GM12878 (cell line): ENCODE measurements at regions of chr19 and their contacts with region 1.

Region 1: DNA sequence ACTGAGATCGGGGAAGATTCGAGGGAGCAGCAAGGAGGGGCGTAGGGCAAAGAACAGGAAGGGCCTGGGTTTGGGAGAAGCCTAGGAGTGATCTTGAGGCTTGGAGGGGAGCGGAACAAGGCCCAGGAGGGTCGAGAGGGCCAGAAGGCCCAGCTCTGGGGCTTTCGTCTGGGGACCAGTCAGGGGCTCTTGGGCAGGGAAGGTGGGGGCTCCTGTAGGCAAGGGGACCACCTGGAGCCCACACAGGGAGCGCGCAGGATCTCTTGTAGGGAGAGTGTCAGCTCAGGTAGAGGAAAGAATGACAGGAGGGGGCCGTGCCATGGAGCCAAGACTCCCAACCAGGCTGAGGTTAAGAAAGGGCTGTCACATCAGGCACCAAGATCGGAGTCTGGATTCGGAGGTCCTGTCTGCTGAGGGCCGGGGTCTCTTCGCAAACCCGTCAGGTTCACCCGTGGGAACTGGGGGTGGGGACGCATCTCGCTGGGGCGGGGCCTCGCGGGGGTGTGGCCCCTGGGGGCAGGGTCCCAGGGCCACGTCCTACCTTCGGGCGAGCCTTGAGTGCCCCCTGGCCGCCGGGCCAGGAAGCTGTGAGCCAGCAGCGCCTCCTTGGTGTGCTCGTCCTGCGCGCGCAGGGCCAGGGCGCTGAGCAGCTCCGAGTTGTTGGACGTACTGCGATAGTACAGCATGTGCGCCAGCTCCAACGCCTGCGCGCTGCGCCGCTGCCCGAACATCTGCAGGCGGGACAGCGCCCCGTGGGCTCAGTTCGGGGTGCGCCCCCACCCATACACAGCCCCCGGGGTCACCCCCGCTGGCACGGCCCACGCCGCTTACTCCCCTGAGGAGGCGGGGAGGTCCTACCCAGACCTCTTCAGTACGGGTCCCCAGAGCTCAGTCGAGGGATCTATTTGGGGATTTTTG is 8.4 kb downstream of the EMP3 start:
- DNase-seq: peak; percentile 82
- ATAC-seq: peak; percentile 83
- H3K4me3 ChIP-seq: peak overlapping the region; percentile 77
- H3K27ac ChIP-seq: peak overlapping the region; percentile 98
- H3K4me1 ChIP-seq: peaks cover 28% of the 10 kb centered on the region
- H3K27me3 ChIP-seq: no peaks in the 10 kb centered on the region
- CTCF ChIP-seq: peak; percentile 85 to 98 (median 95); a peak in 5 of 6 replicates
- EP300 ChIP-seq: no peak
- POLR2A ChIP-seq: peak; percentile 84
- RAD21 ChIP-seq: peak; percentile 91

Region 2: DNA sequence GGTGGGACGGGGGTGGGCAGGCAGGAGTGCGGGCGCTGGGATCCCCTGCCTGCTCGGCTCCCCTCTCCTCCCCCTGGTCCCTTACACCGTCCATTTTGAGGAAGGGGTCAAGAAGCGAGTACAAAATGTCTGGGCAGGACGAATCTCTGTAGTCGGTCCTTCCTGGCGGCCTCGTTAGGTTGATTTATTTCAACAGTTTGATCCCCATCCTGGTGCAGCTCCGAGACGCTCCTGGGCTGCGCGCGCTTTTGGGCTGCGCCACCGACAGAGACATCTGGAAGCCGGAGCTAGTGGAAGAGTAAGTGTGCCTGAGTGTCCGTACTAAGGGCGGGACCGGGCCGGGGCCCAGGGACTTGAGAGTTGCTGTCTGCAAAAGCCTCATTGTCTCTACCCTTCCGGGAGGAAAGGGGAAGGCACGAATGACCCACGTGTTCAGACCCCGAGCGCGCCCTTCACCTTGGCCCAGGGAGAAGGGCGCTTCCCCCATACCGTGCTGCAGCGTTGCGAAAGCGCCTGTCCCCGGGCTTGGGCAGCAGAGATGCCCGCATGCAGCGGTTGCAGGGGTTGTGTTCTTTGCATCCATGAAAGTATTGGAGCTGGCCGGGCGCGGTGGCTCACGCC is 62.1 kb before region 1 on chr19:
- CTCF ChIA-PET with region 1: interaction called, 10 read pairs
- POLR2A ChIA-PET with region 1: no interaction called
- RAD21 ChIA-PET with region 1: interaction called, 9 read pairs
- SMC1A ChIA-PET with region 1: interaction called, 5 read pairs
- in situ Hi-C with region 1: no loop called
- intact Hi-C with region 1: loop called (anchors 1 kb)
- DNase-seq: no peak
- ATAC-seq: peak; percentile 69
- H3K4me3 ChIP-seq: peak overlapping the region; percentile 90
- H3K27ac ChIP-seq: peak overlapping the region; percentile 83
- H3K4me1 ChIP-seq: no peaks in the 10 kb centered on the region
- H3K27me3 ChIP-seq: no peaks in the 10 kb centered on the region; a peak in 1 of 4 replicates
- CTCF ChIP-seq: no peak
- EP300 ChIP-seq: no peak
- POLR2A ChIP-seq: peak; percentile 77
- RAD21 ChIP-seq: no peak

Region 3: GRCh38 chr19:48302600-48302959 is 31.1 kb before region 1 on chr19:
- CTCF ChIA-PET with region 1: no interaction called
- POLR2A ChIA-PET with region 1: no interaction called
- RAD21 ChIA-PET with region 1: no interaction called
- SMC1A ChIA-PET with region 1: no interaction called
- in situ Hi-C with region 1: no loop called
- intact Hi-C with region 1: no loop called
- DNase-seq: no peak
- ATAC-seq: no peak
- H3K4me3 ChIP-seq: no peak overlapping the region
- H3K27ac ChIP-seq: no peak overlapping the region
- H3K4me1 ChIP-seq: no peaks in the 10 kb centered on the region
- H3K27me3 ChIP-seq: no peaks in the 10 kb centered on the region; a peak in 1 of 4 replicates
- CTCF ChIP-seq: no peak
- EP300 ChIP-seq: no peak
- POLR2A ChIP-seq: no peak
- RAD21 ChIP-seq: no peak

Region 4: DNA sequence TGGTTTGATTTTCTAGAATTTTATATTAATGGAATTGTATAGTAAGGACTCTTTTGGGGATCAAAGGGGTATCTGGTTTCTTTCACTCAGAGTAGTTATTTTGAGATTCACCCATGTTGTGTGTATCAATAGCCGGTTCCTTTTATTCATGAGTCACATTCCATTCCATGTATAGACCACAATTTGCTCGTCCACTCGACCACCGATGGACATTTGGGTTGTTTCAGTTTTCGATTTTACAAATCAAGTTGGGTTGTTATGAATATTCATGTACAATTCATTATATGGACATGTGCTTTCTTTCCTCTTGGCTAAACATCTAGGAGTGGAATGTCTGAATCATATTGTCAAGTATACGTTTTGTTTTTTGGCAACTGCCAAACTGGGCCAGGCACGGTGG is 18.0 kb before region 1 on chr19:
- CTCF ChIA-PET with region 1: interaction called, 238 read pairs
- POLR2A ChIA-PET with region 1: interaction called, 194 read pairs
- RAD21 ChIA-PET with region 1: interaction called, 255 read pairs
- SMC1A ChIA-PET with region 1: interaction called, 223 read pairs
- in situ Hi-C with region 1: no loop called
- intact Hi-C with region 1: loop called (anchors 1 kb)
- DNase-seq: no peak
- ATAC-seq: 0 out of 3 replicates have a peak, but pooled peaks have one; percentile 9
- H3K4me3 ChIP-seq: no peak overlapping the region
- H3K27ac ChIP-seq: no peak overlapping the region
- H3K4me1 ChIP-seq: peaks cover 8% of the 10 kb centered on the region
- H3K27me3 ChIP-seq: no peaks in the 10 kb centered on the region
- CTCF ChIP-seq: no peak
- EP300 ChIP-seq: no peak
- POLR2A ChIP-seq: no peak
- RAD21 ChIP-seq: no peak

Region 5: DNA sequence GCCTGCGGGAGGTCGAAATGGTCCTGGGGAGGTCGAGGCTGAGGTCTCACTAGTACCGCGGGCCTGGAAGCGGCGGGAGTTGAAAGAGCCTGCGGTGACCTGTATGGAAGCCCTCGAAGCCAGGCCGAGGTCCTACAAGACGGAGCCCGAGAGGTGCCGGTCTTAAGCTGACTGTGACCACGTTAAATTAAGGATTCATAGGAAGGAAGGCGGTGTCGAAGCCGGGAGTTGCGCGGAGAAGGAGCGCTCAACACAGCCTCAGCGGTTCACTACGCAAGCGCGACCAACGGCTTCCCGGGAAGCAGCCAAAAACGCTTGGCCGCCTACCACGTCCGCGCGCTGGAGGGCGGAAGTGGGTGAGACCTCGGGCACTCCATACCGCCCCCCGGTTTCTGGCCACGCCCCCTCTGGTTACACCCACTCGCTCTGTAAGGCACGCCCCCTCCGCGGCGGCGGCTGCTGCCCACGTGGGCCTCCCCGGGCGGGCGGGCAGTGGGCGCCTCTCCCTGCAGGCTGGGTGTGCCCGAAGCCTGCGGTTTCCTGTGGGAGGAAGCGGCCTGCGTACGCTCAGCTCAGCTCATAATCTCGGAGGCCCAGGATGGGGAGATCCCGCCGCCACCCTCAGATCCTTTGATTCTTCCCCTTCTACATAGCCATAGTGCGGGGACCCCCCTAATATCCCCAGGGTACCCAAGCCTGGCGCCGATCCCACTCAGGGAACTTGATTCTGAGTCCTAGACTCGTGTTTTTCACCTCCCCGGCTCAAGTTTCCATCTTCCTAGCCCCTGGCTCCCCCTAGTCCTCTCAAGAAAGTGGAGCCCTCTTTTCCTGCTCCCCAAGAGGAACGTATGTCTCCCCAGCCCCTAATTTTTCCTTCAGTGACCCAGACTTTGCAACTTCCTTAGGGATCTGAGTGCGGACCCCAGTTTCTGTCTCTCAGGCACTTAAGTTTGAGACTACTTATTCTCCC is 11.8 kb before region 1 on chr19:
- CTCF ChIA-PET with region 1: interaction called, 238 read pairs
- POLR2A ChIA-PET with region 1: interaction called, 194 read pairs
- RAD21 ChIA-PET with region 1: interaction called, 255 read pairs
- SMC1A ChIA-PET with region 1: interaction called, 223 read pairs
- in situ Hi-C with region 1: no loop called
- intact Hi-C with region 1: loop called (anchors 1 kb)
- DNase-seq: peak; percentile 92
- ATAC-seq: peak; percentile 79
- H3K4me3 ChIP-seq: peak overlapping the region; percentile 73
- H3K27ac ChIP-seq: peak overlapping the region; percentile 96
- H3K4me1 ChIP-seq: peaks cover 31% of the 10 kb centered on the region
- H3K27me3 ChIP-seq: no peaks in the 10 kb centered on the region
- CTCF ChIP-seq: no peak
- EP300 ChIP-seq: peak; percentile 40 to 49; a peak in 2 of 4 replicates
- POLR2A ChIP-seq: peak; percentile 86
- RAD21 ChIP-seq: no peak

Region 6: GRCh38 chr19:48351341-48351752 is 17.6 kb after region 1 on chr19:
- CTCF ChIA-PET with region 1: interaction called, 19 read pairs
- POLR2A ChIA-PET with region 1: no interaction called
- RAD21 ChIA-PET with region 1: no interaction called
- SMC1A ChIA-PET with region 1: interaction called, 4 read pairs
- in situ Hi-C with region 1: no loop called
- intact Hi-C with region 1: no loop called
- DNase-seq: no peak
- ATAC-seq: peak; percentile 100
- H3K4me3 ChIP-seq: no peak overlapping the region
- H3K27ac ChIP-seq: no peak overlapping the region
- H3K4me1 ChIP-seq: no peaks in the 10 kb centered on the region
- H3K27me3 ChIP-seq: no peaks in the 10 kb centered on the region
- CTCF ChIP-seq: peak; percentile 71 to 93 (median 90)
- EP300 ChIP-seq: no peak
- POLR2A ChIP-seq: no peak
- RAD21 ChIP-seq: peak; percentile 61

Region 7: GRCh38 chr19:48363810-48364563 is 30.3 kb after region 1 on chr19 and contains the starts of genes SYNGR4 and TMEM143:
- CTCF ChIA-PET with region 1: interaction called, 36 read pairs
- POLR2A ChIA-PET with region 1: interaction called, 39 read pairs
- RAD21 ChIA-PET with region 1: interaction called, 46 read pairs
- SMC1A ChIA-PET with region 1: interaction called, 6 read pairs
- in situ Hi-C with region 1: no loop called
- intact Hi-C with region 1: no loop called
- DNase-seq: peak; percentile 99
- ATAC-seq: peak; percentile 90
- H3K4me3 ChIP-seq: peak within 1 kb of the TSS; percentile 82
- H3K27ac ChIP-seq: peak within 1 kb of the TSS; percentile 99
- H3K4me1 ChIP-seq: peaks cover 9% of the 10 kb centered on the region; the same call in 1 of the 2 replicates
- H3K27me3 ChIP-seq: no peaks in the 10 kb centered on the region
- CTCF ChIP-seq: no peak
- EP300 ChIP-seq: peak in 1 of 2 experiments; percentile 33; a peak in 1 of 4 replicates
- POLR2A ChIP-seq: peak; percentile 70
- RAD21 ChIP-seq: no peak
- polyA plus RNA-seq, gene SYNGR4: not detected
- polyA plus RNA-seq, gene TMEM143: 1.5 to 2.4 TPM

Region 8: GRCh38 chr19:48391107-48391986 is 57.6 kb after region 1 on chr19 and contains the start of gene KDELR1:
- CTCF ChIA-PET with region 1: interaction called, 7 read pairs
- POLR2A ChIA-PET with region 1: interaction called, 3 read pairs
- RAD21 ChIA-PET with region 1: interaction called, 17 read pairs
- SMC1A ChIA-PET with region 1: interaction called, 5 read pairs
- in situ Hi-C with region 1: no loop called
- intact Hi-C with region 1: no loop called
- DNase-seq: no peak
- ATAC-seq: peak; percentile 91
- H3K4me3 ChIP-seq: peak within 1 kb of the TSS; percentile 95
- H3K27ac ChIP-seq: peak within 1 kb of the TSS; percentile 75
- H3K4me1 ChIP-seq: peaks cover 5% of the 10 kb centered on the region; the same call in 1 of the 2 replicates
- H3K27me3 ChIP-seq: peaks cover 13 to 16% of the 10 kb centered on the region in 2 experiments
- CTCF ChIP-seq: peak; percentile 91 to 96 (median 95)
- EP300 ChIP-seq: no peak
- POLR2A ChIP-seq: peak; percentile 68; the same call in 1 of the 2 replicates
- RAD21 ChIP-seq: no peak
- polyA plus RNA-seq, gene KDELR1: 2.3 to 13.2 TPM

Region 9: GRCh38 chr19:48520134-48520533 is 186.4 kb after region 1 on chr19:
- CTCF ChIA-PET with region 1: no interaction called
- POLR2A ChIA-PET with region 1: no interaction called
- RAD21 ChIA-PET with region 1: no interaction called
- SMC1A ChIA-PET with region 1: no interaction called
- in situ Hi-C with region 1: no loop called
- intact Hi-C with region 1: no loop called
- DNase-seq: no peak
- ATAC-seq: no peak
- H3K4me3 ChIP-seq: no peak overlapping the region
- H3K27ac ChIP-seq: no peak overlapping the region
- H3K4me1 ChIP-seq: no peaks in the 10 kb centered on the region
- H3K27me3 ChIP-seq: no peaks in the 10 kb centered on the region
- CTCF ChIP-seq: no peak
- EP300 ChIP-seq: no peak
- POLR2A ChIP-seq: no peak
- RAD21 ChIP-seq: no peak